Kidney (tissue), 22 donors: ENCODE measurements at regions of chr7 and their contacts with region 1.

Region 1: GRCh38 chr7:97845622-97846203 is 26.5 kb downstream of the ASNS start:
- DNase-seq: peak in 2 of 5 donors; percentile 53 to 54
- H3K4me3 ChIP-seq: no peak overlapping the region
- H3K27ac ChIP-seq: no peak overlapping the region
- H3K4me1 ChIP-seq: no peaks in the 10 kb centered on the region
- H3K27me3 ChIP-seq: no peaks in the 10 kb centered on the region
- CTCF ChIP-seq: peak; percentile 21

Region 2: DNA sequence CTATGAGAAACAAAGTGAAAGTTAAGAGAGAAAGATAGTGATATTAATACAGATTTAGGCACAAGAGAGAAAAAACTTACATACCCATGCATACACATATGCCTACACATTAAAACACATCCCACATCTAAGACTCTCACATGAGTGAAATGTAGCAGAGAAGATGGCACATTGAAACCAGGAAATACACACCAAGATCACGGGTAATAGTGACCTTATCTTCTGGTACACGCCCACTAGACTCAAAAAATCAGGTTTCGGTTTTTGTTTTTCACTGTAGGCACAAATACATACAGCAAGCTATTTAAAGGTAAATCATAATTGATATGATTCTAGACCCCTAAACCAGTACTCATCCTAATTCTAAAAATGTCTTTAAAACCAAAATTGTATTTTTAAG is 339.0 kb before region 1 on chr7:
- intact Hi-C with region 1: loop called (anchors 10 kb)
- DNase-seq: no peak
- H3K4me3 ChIP-seq: no peak overlapping the region
- H3K27ac ChIP-seq: no peak overlapping the region
- H3K4me1 ChIP-seq: no peaks in the 10 kb centered on the region
- H3K27me3 ChIP-seq: no peaks in the 10 kb centered on the region
- CTCF ChIP-seq: no peak

Region 3: DNA sequence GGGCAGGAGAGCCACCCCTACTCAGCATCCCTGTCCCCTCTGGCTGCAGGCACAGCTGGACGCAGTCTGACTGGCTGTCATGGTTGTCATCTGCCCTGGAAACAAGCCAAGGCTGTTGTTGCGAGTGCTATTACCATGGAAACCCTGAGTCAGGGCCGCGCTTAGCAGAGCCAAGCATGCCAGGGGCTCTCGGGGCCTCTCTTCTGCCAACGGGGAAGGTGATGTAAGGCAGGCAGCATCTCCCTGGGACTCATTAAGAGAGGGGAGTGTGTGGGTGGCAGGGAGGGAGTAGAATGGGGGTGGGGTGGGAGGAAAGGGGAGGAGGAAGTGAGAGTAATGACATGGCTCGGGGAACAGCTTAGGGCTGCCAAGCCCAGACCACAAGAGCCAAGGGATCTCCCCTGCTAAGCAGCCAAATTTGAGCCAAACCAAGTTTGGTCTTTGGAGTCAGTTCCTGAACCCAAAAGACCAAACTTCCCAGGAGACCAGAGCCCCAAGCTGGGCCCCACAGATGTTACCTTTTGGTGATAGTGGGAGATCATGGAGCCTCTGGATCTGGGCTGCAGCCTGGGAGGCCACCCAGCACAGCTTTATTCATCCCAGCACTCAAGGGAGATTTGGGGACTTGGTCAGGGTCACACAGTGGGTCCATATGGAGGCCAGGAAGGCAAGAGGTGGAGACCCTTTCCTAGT is 956.5 kb after region 1 on chr7:
- intact Hi-C with region 1: no loop called
- DNase-seq: peak; percentile 73 to 95 (median 93)
- H3K4me3 ChIP-seq: no peak overlapping the region
- H3K27ac ChIP-seq: no peak overlapping the region
- H3K4me1 ChIP-seq: no peaks in the 10 kb centered on the region
- H3K27me3 ChIP-seq: no peaks in the 10 kb centered on the region
- CTCF ChIP-seq: no peak